Sigmoid colon (tissue), 7 donors: ENCODE measurements at regions of chr3 and their contacts with region 1.

Region 1: GRCh38 chr3:122942937-122943827 is 84.4 kb downstream of the SEMA5B start:
- DNase-seq: no peak
- H3K4me3 ChIP-seq: no peak overlapping the region
- H3K27ac ChIP-seq: no peak overlapping the region
- H3K4me1 ChIP-seq: peaks cover 0 to 14% (median 4%) of the 10 kb centered on the region in 4 donors
- H3K27me3 ChIP-seq: no peaks in the 10 kb centered on the region
- CTCF ChIP-seq: peak; percentile 58 to 90 (median 80)
- EP300 ChIP-seq: no peak
- POLR2A ChIP-seq: no peak

Region 2: DNA sequence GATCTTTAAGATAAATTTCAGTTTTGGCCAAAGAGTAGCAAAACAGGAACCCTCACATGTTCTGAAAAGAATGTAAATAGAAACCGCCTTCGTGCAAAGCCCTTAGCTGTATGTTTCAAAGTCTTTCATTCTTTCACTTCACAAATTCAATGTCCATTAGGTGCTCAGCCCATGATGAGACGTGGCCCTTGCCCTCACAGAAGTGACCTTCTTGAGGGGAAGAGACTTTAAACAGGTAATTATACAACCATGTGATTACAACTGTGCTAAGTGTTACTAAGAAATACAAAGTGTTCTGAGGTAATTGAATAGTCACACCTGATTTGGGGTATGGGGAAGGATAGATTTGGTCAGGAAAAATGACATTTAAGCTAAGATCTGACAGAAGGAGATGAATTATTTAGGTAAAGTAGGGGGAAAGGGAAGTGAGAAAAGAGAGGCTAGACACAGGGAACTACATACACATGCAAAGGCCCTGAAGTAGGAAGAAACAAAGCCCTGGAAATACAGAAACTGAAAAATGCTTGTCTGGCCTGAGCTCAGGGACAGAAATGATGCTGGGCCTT is 169.2 kb before region 1 on chr3:
- intact Hi-C with region 1: no loop called
- DNase-seq: no peak
- H3K4me3 ChIP-seq: no peak overlapping the region
- H3K27ac ChIP-seq: no peak overlapping the region
- H3K4me1 ChIP-seq: no peaks in the 10 kb centered on the region
- H3K27me3 ChIP-seq: no peaks in the 10 kb centered on the region
- CTCF ChIP-seq: no peak
- EP300 ChIP-seq: no peak
- POLR2A ChIP-seq: no peak

Region 3: DNA sequence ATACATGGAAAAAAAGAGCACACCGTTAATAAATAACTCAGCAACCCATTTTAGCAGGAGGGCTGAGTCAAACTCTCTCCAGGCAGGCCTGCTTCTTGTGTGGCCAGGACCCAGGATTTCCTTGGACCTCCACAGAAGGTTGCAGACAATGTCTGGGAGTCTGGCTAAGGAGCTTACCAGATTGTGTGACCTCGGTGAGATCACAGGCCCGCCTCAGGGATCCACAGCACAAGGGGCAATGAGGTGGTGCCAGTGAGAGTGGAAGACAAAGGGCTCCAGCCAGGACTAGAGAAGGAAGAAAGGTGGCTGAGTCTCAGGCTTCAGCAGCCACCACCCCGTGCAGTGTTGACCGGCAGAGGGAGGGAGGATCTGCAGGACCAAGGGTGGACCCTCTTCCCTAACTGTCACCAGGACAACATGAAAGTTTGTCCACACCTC is 226.3 kb after region 1 on chr3:
- intact Hi-C with region 1: no loop called
- DNase-seq: no peak
- H3K4me3 ChIP-seq: no peak overlapping the region
- H3K27ac ChIP-seq: peak overlapping the region in 3 of 4 donors; percentile 44 to 49 (median 47)
- H3K4me1 ChIP-seq: peaks cover 0 to 11% (median 8%) of the 10 kb centered on the region in 4 donors
- H3K27me3 ChIP-seq: no peaks in the 10 kb centered on the region
- CTCF ChIP-seq: no peak
- EP300 ChIP-seq: no peak
- POLR2A ChIP-seq: no peak

Region 4: DNA sequence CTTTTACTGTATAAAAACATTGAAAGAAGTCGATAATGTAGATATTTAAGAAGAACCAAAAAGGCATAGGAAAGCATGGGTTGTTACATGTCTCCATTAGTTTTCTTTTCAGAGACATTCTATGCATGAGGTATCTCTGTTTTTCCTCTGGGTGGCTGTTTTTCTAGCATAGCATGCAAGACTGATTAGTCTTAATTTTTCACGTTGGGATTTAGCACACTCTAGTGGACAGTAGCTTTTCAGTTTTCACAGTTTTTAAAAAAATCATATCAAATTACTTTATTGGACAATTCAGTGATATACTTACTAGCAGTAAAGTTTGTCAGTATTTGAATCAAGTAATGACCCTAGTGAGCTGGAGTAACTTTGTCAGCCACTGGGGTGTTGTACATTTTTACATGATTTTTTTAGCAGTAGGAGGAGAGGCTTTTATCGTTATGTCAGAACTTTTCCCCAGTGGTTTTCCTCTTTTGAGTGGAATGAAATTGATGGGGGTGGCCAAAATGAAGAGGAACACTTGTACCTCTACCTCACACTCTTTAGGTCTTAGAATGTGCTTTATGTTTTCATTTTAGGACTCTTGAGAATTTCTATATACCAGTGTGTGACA is 315.7 kb after region 1 on chr3:
- intact Hi-C with region 1: loop called (anchors 5 kb)
- DNase-seq: no peak
- H3K4me3 ChIP-seq: no peak overlapping the region
- H3K27ac ChIP-seq: no peak overlapping the region
- H3K4me1 ChIP-seq: no peaks in the 10 kb centered on the region
- H3K27me3 ChIP-seq: no peaks in the 10 kb centered on the region
- CTCF ChIP-seq: peak; percentile 32 to 51 (median 43)
- EP300 ChIP-seq: no peak
- POLR2A ChIP-seq: no peak

Region 5: DNA sequence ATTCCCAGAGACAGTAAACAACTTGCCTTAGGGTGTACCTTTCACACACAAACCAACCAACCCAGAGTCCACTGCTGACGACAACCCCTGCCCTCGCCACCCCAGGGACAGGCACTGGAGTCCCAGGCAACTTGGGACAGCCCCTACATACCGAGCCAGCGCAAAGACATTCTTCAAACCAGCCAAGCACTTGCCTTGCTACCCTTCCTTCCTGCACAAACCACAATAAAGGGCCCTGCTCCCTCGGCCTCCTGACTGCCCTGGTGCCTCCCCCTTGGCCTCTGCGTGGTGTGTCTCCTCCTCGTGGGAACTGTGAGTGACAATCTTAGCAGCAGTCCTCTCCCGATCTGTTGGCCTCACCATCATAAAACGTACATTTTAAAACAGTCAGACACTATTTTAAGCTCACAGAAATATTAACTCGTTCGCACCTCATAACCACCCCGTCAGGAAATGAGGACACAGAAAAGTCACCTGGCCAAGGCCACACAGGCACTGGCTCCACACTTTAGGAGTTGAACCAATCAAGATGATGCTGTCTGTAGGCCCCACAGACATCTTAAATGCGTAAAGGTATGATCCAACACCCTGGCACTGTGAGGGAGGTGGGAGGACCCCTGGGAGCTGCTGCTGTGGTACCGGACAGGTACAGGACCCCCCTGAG is 392.0 kb after region 1 on chr3:
- intact Hi-C with region 1: no loop called
- DNase-seq: peak; percentile 53
- H3K4me3 ChIP-seq: no peak overlapping the region
- H3K27ac ChIP-seq: peak overlapping the region; percentile 6 to 85 (median 36)
- H3K4me1 ChIP-seq: peaks cover 0 to 68% (median 59%) of the 10 kb centered on the region in 4 donors
- H3K27me3 ChIP-seq: no peaks in the 10 kb centered on the region
- CTCF ChIP-seq: no peak
- EP300 ChIP-seq: no peak
- POLR2A ChIP-seq: no peak

Region 6: DNA sequence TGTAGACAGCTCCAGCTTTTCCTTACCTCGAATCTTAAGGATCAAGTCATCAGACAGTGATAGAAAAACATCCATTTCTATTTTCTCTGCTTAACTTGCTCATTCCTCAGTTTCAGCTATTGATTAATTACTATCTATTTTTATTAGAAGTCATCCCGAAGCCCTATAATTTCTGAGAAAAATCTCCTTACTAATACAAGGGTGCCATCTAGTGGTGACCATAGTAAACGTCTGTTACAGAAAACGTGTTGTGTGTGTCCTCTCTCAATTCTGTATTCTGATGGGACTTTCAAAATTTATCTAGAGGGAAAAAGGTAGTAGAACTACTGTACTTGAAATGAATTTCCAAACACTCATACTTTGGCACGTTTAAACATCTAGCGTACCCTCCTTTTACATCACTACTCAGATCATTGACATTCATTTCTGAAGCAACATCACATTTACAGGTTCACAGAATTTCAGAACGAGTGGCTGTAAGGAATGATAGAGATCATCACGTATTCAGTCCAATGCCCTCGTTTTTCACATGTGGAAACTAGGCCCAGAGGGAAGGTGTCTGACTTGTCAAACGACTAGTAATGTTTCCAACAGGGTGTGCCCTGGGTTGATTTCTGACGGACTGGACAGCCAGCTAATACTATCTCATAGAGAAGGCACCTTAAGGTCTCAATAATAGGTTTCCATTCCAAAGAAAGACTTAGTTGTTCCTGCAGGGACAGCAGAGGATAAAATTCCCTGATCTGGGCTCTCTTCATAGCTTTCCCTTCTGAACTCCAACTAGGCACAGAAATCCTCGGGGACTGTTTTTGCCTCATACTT is 616.1 kb after region 1 on chr3:
- intact Hi-C with region 1: loop called (anchors 5 kb)
- DNase-seq: no peak
- H3K4me3 ChIP-seq: no peak overlapping the region
- H3K27ac ChIP-seq: no peak overlapping the region
- H3K4me1 ChIP-seq: peaks cover 0 to 4% (median 2%) of the 10 kb centered on the region in 4 donors
- H3K27me3 ChIP-seq: no peaks in the 10 kb centered on the region
- CTCF ChIP-seq: peak; percentile 48 to 85 (median 64)
- EP300 ChIP-seq: no peak
- POLR2A ChIP-seq: no peak